OCI-LY7 (cell line): ENCODE measurements at regions of chr5 and their contacts with region 1.

Region 1: GRCh38 chr5:17132444-17133083 is 84.9 kb upstream of the BASP1 start:
- DNase-seq: peak; percentile 25
- H3K4me3 ChIP-seq: no peak overlapping the region
- H3K27ac ChIP-seq: no peak overlapping the region
- H3K4me1 ChIP-seq: no peaks in the 10 kb centered on the region
- CTCF ChIP-seq: peak; percentile 86

Region 2: GRCh38 chr5:16489322-16489791 is 643.2 kb before region 1 on chr5:
- CTCF ChIA-PET with region 1: no interaction called
- POLR2A ChIA-PET with region 1: no interaction called
- intact Hi-C with region 1: loop called (anchors 5 kb)
- DNase-seq: peak; percentile 27
- H3K4me3 ChIP-seq: no peak overlapping the region
- H3K27ac ChIP-seq: no peak overlapping the region
- H3K4me1 ChIP-seq: no peaks in the 10 kb centered on the region
- CTCF ChIP-seq: peak; percentile 78

Region 3: DNA sequence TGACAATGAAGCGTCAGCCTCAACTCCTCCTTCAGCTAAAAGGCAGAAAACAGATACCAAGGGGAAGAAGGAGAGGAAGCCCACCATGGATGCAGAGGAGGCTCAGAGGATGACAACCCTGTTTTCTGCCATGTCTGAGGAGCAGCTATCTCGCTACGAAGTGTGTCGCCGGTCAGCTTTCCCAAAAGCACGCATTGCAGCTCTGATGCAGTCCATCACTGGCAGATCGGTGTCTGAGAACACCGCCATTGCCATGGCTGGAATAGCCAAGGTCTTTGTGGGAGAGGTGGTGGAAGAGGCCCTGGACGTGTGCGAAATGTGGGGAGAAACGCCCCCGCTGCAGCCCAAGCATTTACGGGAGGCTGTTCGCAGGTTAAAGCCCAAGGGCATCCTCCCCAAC is 472.4 kb after region 1 on chr5:
- CTCF ChIA-PET with region 1: no interaction called
- POLR2A ChIA-PET with region 1: no interaction called
- intact Hi-C with region 1: no loop called
- DNase-seq: no peak
- H3K4me3 ChIP-seq: no peak overlapping the region
- H3K27ac ChIP-seq: no peak overlapping the region
- H3K4me1 ChIP-seq: no peaks in the 10 kb centered on the region
- CTCF ChIP-seq: no peak